ENCODE measurements at regions of chr3 and their contacts with region 1.

Region 1: GRCh38 chr3:184513276-184514170 is 48.1 kb upstream of the EPHB3 start:
- DNase-seq: peak; percentile 90

Region 2: GRCh38 chr3:184417619-184418327 is 95.8 kb before region 1 on chr3:
- intact Hi-C with region 1: loop called (anchors 5 kb)
- DNase-seq: peak; percentile 76

Region 3: DNA sequence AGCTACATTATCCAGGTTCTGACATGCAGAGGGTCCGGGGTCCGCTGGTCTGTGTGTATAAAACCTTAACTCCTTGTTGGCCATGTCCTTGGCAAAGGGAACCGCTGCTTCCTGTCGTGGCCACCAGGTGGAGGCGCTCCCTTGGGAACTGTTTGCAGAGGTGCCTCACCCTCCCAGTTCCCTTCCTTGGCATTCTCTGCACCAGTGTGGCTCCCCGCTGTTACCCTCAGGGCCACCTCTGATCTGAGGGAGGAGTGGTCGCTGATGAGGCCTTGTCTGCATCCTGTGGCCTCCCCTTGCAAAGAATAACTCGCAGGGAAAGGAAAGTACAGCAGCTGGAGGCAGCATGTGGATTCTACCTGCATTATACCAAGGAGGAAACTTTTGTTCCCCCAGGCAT is 44.1 kb before region 1 on chr3:
- intact Hi-C with region 1: loop called (anchors 5 kb)
- DNase-seq: peak; percentile 72

Region 4: GRCh38 chr3:184786280-184786941 is 272.9 kb after region 1 on chr3:
- intact Hi-C with region 1: no loop called
- DNase-seq: peak; percentile 81

Measured in cardiac septum (tissue), 1 donor.